CD14-positive monocyte (primary cell): ENCODE measurements at regions of chr9 and their contacts with region 1.

Region 1: GRCh38 chr9:76704593-76705204 is 59.5 kb upstream of the PCA3 start:
- DNase-seq: peak; percentile 55 to 72 (median 66)
- H3K4me3 ChIP-seq: no peak overlapping the region
- H3K4me3 Mint-ChIP-seq: peak overlapping the region in 1 of 2 donors; percentile 32
- H3K27ac ChIP-seq: no peak overlapping the region
- H3K27ac Mint-ChIP-seq: peak overlapping the region in 1 of 7 donors; percentile 28
- H3K4me1 ChIP-seq: no peaks in the 10 kb centered on the region
- H3K4me1 Mint-ChIP-seq: peaks cover 31% of the 10 kb centered on the region
- H3K27me3 ChIP-seq: no peaks in the 10 kb centered on the region
- H3K27me3 Mint-ChIP-seq: peaks cover 2 to 19% (median 3%) of the 10 kb centered on the region in 3 donors
- CTCF ChIP-seq: peak; percentile 87

Region 2: DNA sequence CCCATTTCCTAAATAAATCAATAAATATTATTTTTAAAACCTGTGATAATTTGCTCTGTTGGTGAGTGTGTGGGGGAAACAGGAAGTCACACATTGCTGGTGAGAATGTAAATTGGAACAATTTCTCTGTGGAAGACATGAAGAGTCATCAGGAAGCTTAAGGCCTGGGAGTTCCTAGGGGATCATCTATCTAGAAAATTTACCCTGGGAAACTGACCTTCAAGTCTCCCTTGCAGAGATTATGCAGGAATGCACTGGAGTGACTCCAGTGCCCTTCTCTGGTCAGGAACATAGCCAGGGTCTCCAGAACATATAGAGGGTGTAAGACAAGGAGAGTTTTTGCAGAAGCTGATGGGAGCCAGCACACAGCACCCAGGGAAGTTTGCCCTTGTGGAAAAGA is 258.7 kb before region 1 on chr9:
- intact Hi-C with region 1: loop called (anchors 2 to 5 kb)
- DNase-seq: no peak
- H3K4me3 ChIP-seq: no peak overlapping the region
- H3K4me3 Mint-ChIP-seq: no peak overlapping the region
- H3K27ac ChIP-seq: no peak overlapping the region
- H3K27ac Mint-ChIP-seq: peak overlapping the region in 1 of 7 donors; percentile 54
- H3K4me1 ChIP-seq: peaks cover 0 to 3% of the 10 kb centered on the region in 2 donors
- H3K4me1 Mint-ChIP-seq: peaks cover 12% of the 10 kb centered on the region
- H3K27me3 ChIP-seq: no peaks in the 10 kb centered on the region
- H3K27me3 Mint-ChIP-seq: no peaks in the 10 kb centered on the region
- CTCF ChIP-seq: no peak